Activated B cell treated with CpG ODN at 0.5 μM for 24 hours (primary cell): ENCODE measurements at regions of chr11 and their contacts with region 1.

Region 1: DNA sequence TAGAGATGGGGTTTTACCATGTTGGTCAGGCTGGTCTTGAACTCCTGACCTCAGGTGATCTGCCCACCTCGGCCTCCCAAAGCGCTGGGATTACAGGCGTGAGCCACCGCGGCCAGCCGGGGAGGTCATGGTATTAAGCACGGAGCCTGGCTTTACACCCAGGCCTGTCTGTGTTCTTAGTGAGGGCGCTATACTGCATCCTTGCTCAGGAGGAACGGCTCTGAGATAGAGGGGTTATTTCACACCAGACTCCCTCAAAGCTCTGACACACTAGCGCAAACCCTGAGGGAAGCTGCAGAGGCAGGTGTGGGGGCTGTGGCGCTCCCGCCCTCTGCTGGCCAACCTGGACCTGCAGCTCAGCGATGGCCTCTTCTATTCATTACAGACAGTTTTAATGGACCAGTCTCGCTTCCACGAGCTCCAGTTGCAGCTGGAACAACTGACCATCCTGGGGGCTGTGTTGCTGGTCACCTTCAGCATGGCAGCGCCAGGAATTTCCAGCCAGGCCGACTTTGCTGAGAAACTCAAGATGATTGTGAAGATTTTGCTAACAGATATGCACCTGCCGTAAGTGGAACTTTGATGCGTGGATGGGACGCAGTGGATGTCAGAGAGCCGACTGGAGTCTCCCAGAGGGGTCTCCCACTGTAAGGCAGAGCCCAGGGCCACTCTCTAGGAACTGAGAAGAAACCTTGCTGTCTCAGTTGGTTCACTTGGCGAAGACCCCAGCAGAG is 26.2 kb downstream of the TCP11L1 start:
- DNase-seq: peak; percentile 52
- ATAC-seq: peak; percentile 92
- H3K4me3 Mint-ChIP-seq: no peak overlapping the region
- H3K27ac Mint-ChIP-seq: no peak overlapping the region
- H3K4me1 Mint-ChIP-seq: peaks cover 27% of the 10 kb centered on the region
- H3K27me3 Mint-ChIP-seq: no peaks in the 10 kb centered on the region
- CTCF ChIP-seq: peak; percentile 30

Region 2: GRCh38 chr11:32809313-32809712 is 256.3 kb before region 1 on chr11:
- CTCF ChIA-PET with region 1: interaction called, 16 read pairs
- POLR2A ChIA-PET with region 1: no interaction called
- intact Hi-C with region 1: loop called (anchors 1 kb)
- DNase-seq: no peak
- ATAC-seq: peak; percentile 66
- H3K4me3 Mint-ChIP-seq: no peak overlapping the region
- H3K27ac Mint-ChIP-seq: no peak overlapping the region
- H3K4me1 Mint-ChIP-seq: no peaks in the 10 kb centered on the region
- H3K27me3 Mint-ChIP-seq: no peaks in the 10 kb centered on the region
- CTCF ChIP-seq: no peak

Region 3: GRCh38 chr11:32884770-32885384 is 180.7 kb before region 1 on chr11:
- CTCF ChIA-PET with region 1: no interaction called
- POLR2A ChIA-PET with region 1: no interaction called
- intact Hi-C with region 1: loop called (anchors 1 kb)
- DNase-seq: no peak
- ATAC-seq: no peak
- H3K4me3 Mint-ChIP-seq: no peak overlapping the region
- H3K27ac Mint-ChIP-seq: no peak overlapping the region
- H3K4me1 Mint-ChIP-seq: no peaks in the 10 kb centered on the region
- H3K27me3 Mint-ChIP-seq: no peaks in the 10 kb centered on the region
- CTCF ChIP-seq: no peak

Region 4: GRCh38 chr11:32968541-32968940 is 97.1 kb before region 1 on chr11:
- CTCF ChIA-PET with region 1: interaction called, 37 read pairs
- POLR2A ChIA-PET with region 1: no interaction called
- intact Hi-C with region 1: no loop called
- DNase-seq: no peak
- ATAC-seq: no peak
- H3K4me3 Mint-ChIP-seq: no peak overlapping the region
- H3K27ac Mint-ChIP-seq: no peak overlapping the region
- H3K4me1 Mint-ChIP-seq: no peaks in the 10 kb centered on the region
- H3K27me3 Mint-ChIP-seq: no peaks in the 10 kb centered on the region
- CTCF ChIP-seq: no peak

Region 5: DNA sequence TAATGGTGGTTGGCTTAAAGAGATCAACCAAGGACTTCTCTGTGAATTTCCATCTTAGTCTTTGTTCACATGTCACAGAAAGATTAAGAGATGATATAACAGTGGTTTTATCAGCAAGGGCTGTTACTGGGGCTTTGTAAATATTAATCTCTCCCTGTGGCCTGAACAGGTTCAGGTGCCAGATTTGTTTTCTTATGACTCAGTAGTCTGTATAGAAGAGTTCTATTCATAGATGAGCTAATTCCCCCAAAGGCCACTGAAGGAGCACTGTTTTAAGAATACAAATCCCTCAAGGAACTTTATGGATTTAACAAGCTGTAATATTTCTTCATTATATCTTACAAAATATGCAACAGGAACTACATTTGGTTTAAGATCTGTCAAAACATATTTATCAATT is 24.2 kb after region 1 on chr11:
- CTCF ChIA-PET with region 1: no interaction called
- POLR2A ChIA-PET with region 1: no interaction called
- intact Hi-C with region 1: no loop called
- DNase-seq: no peak
- ATAC-seq: no peak
- H3K4me3 Mint-ChIP-seq: no peak overlapping the region
- H3K27ac Mint-ChIP-seq: no peak overlapping the region
- H3K4me1 Mint-ChIP-seq: no peaks in the 10 kb centered on the region
- H3K27me3 Mint-ChIP-seq: no peaks in the 10 kb centered on the region
- CTCF ChIP-seq: no peak